Mammary epithelial cell (primary cell): ENCODE measurements at regions of chr13 and their contacts with region 1.

Region 1: DNA sequence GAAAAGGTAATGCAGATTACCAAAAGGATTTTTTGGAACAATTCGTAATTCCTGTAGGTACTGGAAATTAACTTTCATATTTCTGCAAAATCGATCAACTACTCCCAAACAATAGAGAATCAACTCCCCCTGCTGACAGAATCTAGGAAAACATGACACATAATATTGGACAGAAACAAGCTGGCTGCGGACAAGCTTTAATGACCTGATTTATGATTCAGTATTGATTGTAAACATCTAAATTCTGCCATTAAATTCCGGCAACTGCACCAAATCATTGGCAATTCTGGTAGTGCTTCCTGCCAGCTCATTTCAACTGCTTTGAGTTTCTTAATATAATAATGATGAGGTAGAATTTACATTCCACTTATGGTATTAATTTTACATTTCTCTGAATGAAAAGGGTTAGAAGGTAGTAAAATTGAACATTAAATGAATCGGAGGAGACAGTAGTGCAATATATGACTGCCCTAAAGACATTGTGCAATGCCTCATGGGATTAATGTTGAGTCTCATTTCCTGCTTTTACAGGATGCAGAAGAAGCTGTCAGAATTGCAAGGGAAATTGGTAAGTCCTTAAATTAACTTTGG is 146.5 kb downstream of the PCCA start:
- DNase-seq: peak; percentile 28
- H3K4me3 ChIP-seq: no peak overlapping the region
- H3K27ac ChIP-seq: no peak overlapping the region
- H3K4me1 ChIP-seq: peaks cover 2% of the 10 kb centered on the region
- H3K27me3 ChIP-seq: no peaks in the 10 kb centered on the region
- CTCF ChIP-seq: peak; percentile 43 to 58

Region 2: GRCh38 chr13:99590519-99591011 is 644.8 kb before region 1 on chr13:
- CTCF ChIA-PET with region 1: no interaction called
- dilution Hi-C with region 1: no loop called
- in situ Hi-C with region 1: no loop called
- intact Hi-C with region 1: no loop called
- DNase-seq: peak; percentile 35
- H3K4me3 ChIP-seq: no peak overlapping the region
- H3K27ac ChIP-seq: no peak overlapping the region
- H3K4me1 ChIP-seq: no peaks in the 10 kb centered on the region
- H3K27me3 ChIP-seq: no peaks in the 10 kb centered on the region
- CTCF ChIP-seq: no peak

Region 3: GRCh38 chr13:99916366-99917103 is 318.9 kb before region 1 on chr13:
- CTCF ChIA-PET with region 1: interaction called, 5 read pairs
- dilution Hi-C with region 1: no loop called
- in situ Hi-C with region 1: loop called (anchors 5 to 10 kb)
- intact Hi-C with region 1: loop called (anchors 1 kb)
- DNase-seq: peak; percentile 66
- H3K4me3 ChIP-seq: no peak overlapping the region
- H3K27ac ChIP-seq: no peak overlapping the region
- H3K4me1 ChIP-seq: no peaks in the 10 kb centered on the region
- H3K27me3 ChIP-seq: no peaks in the 10 kb centered on the region
- CTCF ChIP-seq: peak; percentile 98 to 99

Region 4: DNA sequence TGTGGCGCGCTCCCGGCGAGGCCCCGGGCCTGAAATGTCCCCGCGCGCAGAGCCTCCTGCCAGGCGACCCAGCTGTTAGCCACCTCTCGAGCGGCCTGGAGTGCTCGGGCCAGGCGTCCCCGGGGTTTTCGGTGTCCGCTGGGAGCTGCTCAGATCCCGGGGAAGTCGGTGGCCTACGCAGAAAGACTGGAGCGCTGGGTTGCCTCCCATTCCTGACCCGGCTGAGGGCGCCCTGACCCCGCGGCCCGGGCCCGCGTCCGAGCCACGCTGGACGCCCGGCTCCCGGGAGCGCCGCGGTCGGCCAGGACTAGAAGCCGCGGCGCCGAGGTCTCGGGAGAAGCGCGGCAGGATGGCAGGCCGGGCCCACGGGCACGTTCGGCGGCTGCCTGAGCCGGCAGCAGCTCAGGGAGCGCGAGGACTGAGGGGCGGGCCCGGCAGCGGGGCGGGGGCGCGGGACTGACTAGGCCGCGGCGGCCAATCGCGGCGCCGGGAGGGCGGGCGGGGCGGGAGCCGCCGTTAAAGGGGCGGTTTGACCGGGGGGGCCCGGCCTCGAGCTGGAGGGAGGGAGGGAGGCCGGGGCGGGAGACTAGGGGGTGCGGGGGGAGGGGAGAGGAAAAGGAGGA is 255.1 kb before region 1 on chr13:
- CTCF ChIA-PET with region 1: no interaction called
- dilution Hi-C with region 1: no loop called
- in situ Hi-C with region 1: no loop called
- intact Hi-C with region 1: loop called (anchors 2 kb)
- DNase-seq: peak; percentile 76
- H3K4me3 ChIP-seq: peak overlapping the region; percentile 40 to 61 (median 58)
- H3K27ac ChIP-seq: no peak overlapping the region
- H3K4me1 ChIP-seq: peaks cover 20% of the 10 kb centered on the region
- H3K27me3 ChIP-seq: peaks cover 58% of the 10 kb centered on the region
- CTCF ChIP-seq: no peak

Region 5: DNA sequence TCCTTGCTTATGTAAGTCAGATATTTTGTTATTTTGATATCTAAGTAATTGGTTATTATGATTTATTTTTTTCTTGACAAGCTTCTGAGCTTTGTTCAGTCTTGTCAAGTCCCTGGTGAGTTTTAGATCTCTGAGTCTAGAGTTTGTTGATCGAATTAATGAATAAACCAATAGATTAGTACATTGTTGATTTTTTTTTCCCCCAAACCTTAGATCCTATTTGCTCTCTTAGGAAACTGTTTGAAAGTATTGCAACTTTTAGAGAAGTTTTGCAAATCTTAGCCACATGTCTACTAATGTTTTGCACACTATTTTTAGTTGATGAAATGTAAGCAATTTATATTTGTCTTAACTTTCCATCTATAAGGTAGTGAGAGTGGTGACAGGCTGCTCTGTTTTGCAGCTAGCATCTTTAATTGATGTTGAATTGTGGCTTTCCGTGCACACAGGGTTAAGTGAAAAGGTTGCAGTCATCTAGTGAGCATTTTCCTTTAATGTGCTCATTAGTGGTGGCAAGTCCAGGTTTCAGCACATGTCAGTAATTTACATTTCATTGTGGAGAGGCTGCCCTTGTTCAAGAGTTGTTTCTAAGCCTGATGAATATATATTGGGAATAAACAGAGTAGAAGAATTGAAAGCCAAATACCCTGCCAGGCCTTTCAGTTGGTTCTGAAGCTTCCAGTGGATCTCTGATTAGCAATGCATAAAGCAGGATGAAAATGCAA is 60.2 kb before region 1 on chr13:
- CTCF ChIA-PET with region 1: no interaction called
- dilution Hi-C with region 1: no loop called
- in situ Hi-C with region 1: no loop called
- intact Hi-C with region 1: no loop called
- DNase-seq: no peak
- H3K4me3 ChIP-seq: no peak overlapping the region
- H3K27ac ChIP-seq: no peak overlapping the region
- H3K4me1 ChIP-seq: peaks cover 4% of the 10 kb centered on the region
- H3K27me3 ChIP-seq: no peaks in the 10 kb centered on the region
- CTCF ChIP-seq: no peak

Region 6: DNA sequence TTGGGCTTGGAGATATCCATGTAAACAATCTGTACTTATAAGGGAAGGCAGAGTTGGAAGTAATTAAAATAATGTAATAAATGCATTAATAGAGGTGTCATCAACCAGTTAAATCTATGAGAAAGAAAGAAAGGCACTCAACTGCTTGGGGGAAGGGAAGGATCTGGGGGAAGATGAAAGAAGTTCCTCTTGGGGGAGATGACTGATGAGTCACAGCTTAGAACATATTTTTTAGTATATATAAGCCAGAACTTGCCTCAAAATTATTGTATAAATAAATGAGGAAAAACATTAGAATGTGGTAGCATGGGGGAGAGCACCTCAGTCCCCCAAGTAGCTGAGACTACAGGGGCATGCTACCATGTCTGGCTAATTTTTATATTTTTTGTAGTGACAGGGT is 147.4 kb after region 1 on chr13:
- CTCF ChIA-PET with region 1: interaction called, 12 read pairs
- dilution Hi-C with region 1: no loop called
- in situ Hi-C with region 1: no loop called
- intact Hi-C with region 1: no loop called
- DNase-seq: no peak
- H3K4me3 ChIP-seq: no peak overlapping the region
- H3K27ac ChIP-seq: no peak overlapping the region
- H3K4me1 ChIP-seq: peaks cover 4% of the 10 kb centered on the region
- H3K27me3 ChIP-seq: no peaks in the 10 kb centered on the region
- CTCF ChIP-seq: no peak

Region 7: DNA sequence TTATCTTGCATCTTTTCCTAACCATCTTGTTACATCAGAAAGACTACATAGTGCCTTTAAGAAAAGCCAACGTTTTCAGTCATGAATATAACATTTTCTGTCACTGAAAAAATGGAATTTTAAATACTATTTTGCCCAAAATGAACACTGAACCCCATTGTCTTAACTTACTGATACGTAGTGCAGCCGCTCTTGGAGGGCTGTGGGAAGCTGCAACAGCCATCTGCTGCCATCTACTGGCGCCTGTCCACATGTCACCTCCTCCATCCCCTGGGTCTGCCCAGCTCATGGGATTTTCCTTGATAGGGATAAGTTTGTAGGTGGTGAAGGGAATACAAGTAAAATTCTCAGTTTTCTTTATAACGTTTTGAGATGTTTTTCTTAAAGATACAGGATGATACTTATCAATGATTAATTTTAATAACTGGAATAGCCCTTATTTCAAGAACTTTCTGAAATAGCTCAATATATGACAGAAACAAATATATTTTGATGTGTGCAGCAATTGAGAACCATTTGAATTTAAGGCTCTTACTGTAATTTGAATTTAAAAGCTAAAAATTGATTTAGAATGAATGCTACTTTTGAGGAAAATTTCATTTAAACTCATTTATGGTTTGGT is 279.5 kb after region 1 on chr13:
- CTCF ChIA-PET with region 1: interaction called, 6 read pairs
- dilution Hi-C with region 1: no loop called
- in situ Hi-C with region 1: loop called in 1 of 2 experiments (anchors 25 kb)
- intact Hi-C with region 1: loop called (anchors 1 kb)
- DNase-seq: peak; percentile 48
- H3K4me3 ChIP-seq: no peak overlapping the region
- H3K27ac ChIP-seq: no peak overlapping the region
- H3K4me1 ChIP-seq: no peaks in the 10 kb centered on the region
- H3K27me3 ChIP-seq: no peaks in the 10 kb centered on the region
- CTCF ChIP-seq: peak; percentile 94 to 97